CD4-positive, alpha-beta T cell (primary cell): ENCODE measurements at regions of chr4 and their contacts with region 1.

Region 1: GRCh38 chr4:124334119-124334518 is 378.4 kb downstream of the ANKRD50 start:
- DNase-seq: peak in 2 of 14 experiments; percentile 3 to 5
- ATAC-seq: no peak
- H3K4me3 ChIP-seq: no peak overlapping the region
- H3K4me3 Mint-ChIP-seq: no peak overlapping the region
- H3K27ac ChIP-seq: no peak overlapping the region
- H3K27ac Mint-ChIP-seq: no peak overlapping the region
- H3K4me1 ChIP-seq: no peaks in the 10 kb centered on the region
- H3K4me1 Mint-ChIP-seq: no peaks in the 10 kb centered on the region
- H3K27me3 ChIP-seq: no peaks in the 10 kb centered on the region
- H3K27me3 Mint-ChIP-seq: peaks cover 5% of the 10 kb centered on the region
- CTCF ChIP-seq: no peak

Region 2: GRCh38 chr4:124483115-124483898 is 149.2 kb after region 1 on chr4:
- CTCF ChIA-PET with region 1: no interaction called
- POLR2A ChIA-PET with region 1: no interaction called
- intact Hi-C with region 1: no loop called
- DNase-seq: no peak
- ATAC-seq: no peak
- H3K4me3 ChIP-seq: no peak overlapping the region
- H3K4me3 Mint-ChIP-seq: no peak overlapping the region
- H3K27ac ChIP-seq: no peak overlapping the region
- H3K27ac Mint-ChIP-seq: no peak overlapping the region
- H3K4me1 ChIP-seq: no peaks in the 10 kb centered on the region
- H3K4me1 Mint-ChIP-seq: no peaks in the 10 kb centered on the region
- H3K27me3 ChIP-seq: no peaks in the 10 kb centered on the region
- H3K27me3 Mint-ChIP-seq: no peaks in the 10 kb centered on the region
- CTCF ChIP-seq: no peak

Region 3: GRCh38 chr4:125283707-125284279 is 949.7 kb after region 1 on chr4:
- CTCF ChIA-PET with region 1: no interaction called
- POLR2A ChIA-PET with region 1: no interaction called
- intact Hi-C with region 1: loop called (anchors 5 kb)
- DNase-seq: no peak
- ATAC-seq: no peak
- H3K4me3 ChIP-seq: no peak overlapping the region
- H3K4me3 Mint-ChIP-seq: no peak overlapping the region
- H3K27ac ChIP-seq: no peak overlapping the region
- H3K27ac Mint-ChIP-seq: no peak overlapping the region
- H3K4me1 ChIP-seq: no peaks in the 10 kb centered on the region
- H3K4me1 Mint-ChIP-seq: no peaks in the 10 kb centered on the region
- H3K27me3 ChIP-seq: no peaks in the 10 kb centered on the region
- H3K27me3 Mint-ChIP-seq: no peaks in the 10 kb centered on the region
- CTCF ChIP-seq: peak; percentile 38